Activated CD4-positive, alpha-beta T cell treated with anti-CD3 and anti-CD28 coated beads for 36 hours (primary cell): ENCODE measurements at regions of chr14 and their contacts with region 1.

Region 1: DNA sequence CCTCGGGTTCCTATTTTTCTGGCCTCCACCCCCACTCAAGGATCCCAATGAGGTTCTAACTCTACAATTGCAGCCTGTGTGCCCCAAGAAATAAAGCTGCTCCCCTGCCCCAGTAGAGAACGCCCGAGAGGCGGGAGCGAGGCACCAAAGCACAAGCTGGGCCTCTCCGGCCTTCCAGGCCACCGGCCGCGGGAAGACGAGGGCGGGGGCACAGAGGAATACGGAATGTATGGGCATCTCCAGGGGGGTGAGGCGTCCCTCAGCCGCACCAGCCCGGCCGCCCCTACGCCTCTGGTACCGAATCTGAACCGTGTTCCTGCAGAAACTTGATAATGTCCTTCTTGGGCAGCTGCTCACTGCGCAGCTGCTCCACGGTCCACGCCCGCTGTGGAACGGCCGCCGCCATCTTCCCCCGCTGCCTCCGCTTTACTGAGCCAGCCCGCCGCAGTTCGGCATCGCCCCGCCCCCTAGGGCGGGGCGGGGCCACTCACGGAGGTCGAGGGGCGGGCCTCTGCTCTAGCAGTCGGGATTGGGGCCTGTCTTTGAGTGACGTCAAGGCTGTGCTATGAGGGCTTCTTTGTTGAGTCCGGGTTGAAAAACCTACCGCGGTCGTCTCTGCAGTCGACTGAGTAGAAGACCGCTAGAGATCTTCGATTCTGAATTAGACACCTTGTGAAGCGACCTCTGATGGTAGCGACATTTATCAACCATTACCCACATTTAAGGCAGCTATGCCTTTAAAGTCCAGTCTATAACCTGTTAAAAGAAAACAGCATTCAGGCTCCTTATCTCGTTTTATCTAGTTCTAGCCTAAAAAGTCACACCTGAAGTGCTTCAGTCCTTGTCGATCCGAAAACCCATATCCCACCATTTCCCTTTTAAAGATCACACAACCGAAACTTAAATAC is at the start of gene FKBP3:
- DNase-seq: peak; percentile 97
- ATAC-seq: peak; percentile 94
- H3K4me3 Mint-ChIP-seq: peak within 1 kb of the TSS; percentile 93
- H3K27ac Mint-ChIP-seq: peak within 1 kb of the TSS; percentile 99
- H3K4me1 Mint-ChIP-seq: peaks cover 34% of the 10 kb centered on the region
- H3K27me3 Mint-ChIP-seq: no peaks in the 10 kb centered on the region
- total RNA-seq, gene FKBP3: 70.5 to 73.9 TPM

Region 2: DNA sequence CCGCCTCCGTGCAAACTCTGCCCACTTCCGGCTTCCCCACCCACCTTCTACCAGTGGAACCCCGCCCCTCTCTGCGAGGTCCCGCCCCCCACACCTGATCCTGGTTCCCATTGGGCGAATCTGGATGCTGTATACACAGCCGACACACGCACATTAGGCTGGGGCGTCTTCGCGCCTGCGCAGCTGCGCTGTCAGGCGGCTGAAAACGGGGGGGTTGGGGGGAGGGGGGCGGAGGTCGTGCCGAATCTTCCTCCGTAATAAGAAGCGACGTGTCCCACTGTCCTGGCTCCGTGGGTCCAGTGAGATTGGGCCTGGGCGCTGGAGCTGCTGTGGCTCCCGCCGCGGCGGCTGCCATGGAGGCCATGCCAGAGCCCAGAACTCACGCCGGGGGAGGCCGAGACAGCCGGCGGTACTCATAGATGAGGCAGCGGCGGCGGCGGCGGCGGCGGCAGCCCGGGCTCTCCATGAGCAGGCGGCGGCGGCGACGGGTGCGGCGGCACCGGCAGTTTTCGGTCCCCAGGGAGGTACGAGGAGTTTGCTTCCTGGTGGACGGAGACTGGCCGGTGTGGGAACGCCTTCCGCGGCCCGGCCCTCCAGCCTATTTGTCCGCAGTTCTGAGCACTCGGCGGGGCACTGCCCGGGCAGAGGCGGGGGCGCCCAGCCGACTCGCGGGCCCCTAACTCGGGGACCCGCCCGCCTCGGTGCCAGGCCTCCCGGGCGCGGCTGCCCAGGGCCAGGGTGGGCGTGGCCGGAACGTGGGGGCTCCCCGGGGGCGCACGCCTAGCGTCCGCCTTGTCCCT is 237.1 kb before region 1 on chr14:
- CTCF ChIA-PET with region 1: no interaction called
- POLR2A ChIA-PET with region 1: no interaction called
- intact Hi-C with region 1: loop called (anchors 1 kb)
- DNase-seq: peak; percentile 99
- ATAC-seq: peak; percentile 99
- H3K4me3 Mint-ChIP-seq: peak overlapping the region; percentile 82
- H3K27ac Mint-ChIP-seq: peak overlapping the region; percentile 90
- H3K4me1 Mint-ChIP-seq: peaks cover 13% of the 10 kb centered on the region
- H3K27me3 Mint-ChIP-seq: no peaks in the 10 kb centered on the region

Region 3: GRCh38 chr14:44961604-44962333 is 172.5 kb before region 1 on chr14 and contains the starts of genes KLHL28 and TOGARAM1:
- CTCF ChIA-PET with region 1: interaction called, 5 read pairs
- POLR2A ChIA-PET with region 1: interaction called, 8 read pairs
- intact Hi-C with region 1: loop called (anchors 1 kb)
- DNase-seq: peak; percentile 96
- ATAC-seq: peak; percentile 94
- H3K4me3 Mint-ChIP-seq: no peak within 1 kb of the TSS
- H3K27ac Mint-ChIP-seq: no peak within 1 kb of the TSS
- H3K4me1 Mint-ChIP-seq: peaks cover 51% of the 10 kb centered on the region
- H3K27me3 Mint-ChIP-seq: no peaks in the 10 kb centered on the region
- total RNA-seq, gene KLHL28: 11.3 to 12.3 TPM
- total RNA-seq, gene TOGARAM1: 5.7 to 6.6 TPM

Region 4: GRCh38 chr14:45070215-45070614 is 64.1 kb before region 1 on chr14:
- CTCF ChIA-PET with region 1: no interaction called
- POLR2A ChIA-PET with region 1: no interaction called
- intact Hi-C with region 1: no loop called
- DNase-seq: no peak
- ATAC-seq: no peak
- H3K4me3 Mint-ChIP-seq: no peak overlapping the region
- H3K27ac Mint-ChIP-seq: no peak overlapping the region
- H3K4me1 Mint-ChIP-seq: no peaks in the 10 kb centered on the region
- H3K27me3 Mint-ChIP-seq: no peaks in the 10 kb centered on the region

Region 5: DNA sequence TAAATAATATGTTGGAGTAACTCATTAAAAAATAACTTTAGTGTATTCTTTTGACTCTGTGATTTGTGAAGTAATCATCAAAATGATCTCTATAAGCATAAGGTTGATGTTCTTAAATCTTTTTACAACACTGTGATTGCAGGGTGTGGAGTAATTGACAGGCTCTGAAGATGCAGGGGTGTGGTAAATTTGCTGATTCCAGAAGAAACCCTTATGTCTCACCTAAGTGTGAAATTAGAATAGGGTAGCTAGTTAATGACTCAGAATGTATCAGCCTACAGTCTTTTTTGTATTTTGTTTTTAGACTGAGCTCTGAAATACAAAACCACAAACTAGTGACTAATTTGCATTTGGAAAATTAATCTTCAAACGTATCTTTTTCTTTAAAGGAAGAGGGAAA is 44.5 kb before region 1 on chr14:
- CTCF ChIA-PET with region 1: interaction called, 3 read pairs
- POLR2A ChIA-PET with region 1: no interaction called
- intact Hi-C with region 1: loop called in 1 of 2 experiments (anchors 1 kb)
- DNase-seq: peak; percentile 27
- ATAC-seq: peak; percentile 95
- H3K4me3 Mint-ChIP-seq: peak overlapping the region; percentile 43
- H3K27ac Mint-ChIP-seq: peak overlapping the region; percentile 88
- H3K4me1 Mint-ChIP-seq: peaks cover 72% of the 10 kb centered on the region
- H3K27me3 Mint-ChIP-seq: no peaks in the 10 kb centered on the region

Region 6: GRCh38 chr14:45169906-45170305 is 35.6 kb after region 1 on chr14:
- CTCF ChIA-PET with region 1: no interaction called
- POLR2A ChIA-PET with region 1: no interaction called
- intact Hi-C with region 1: no loop called
- DNase-seq: no peak
- ATAC-seq: no peak
- H3K4me3 Mint-ChIP-seq: no peak overlapping the region
- H3K27ac Mint-ChIP-seq: no peak overlapping the region
- H3K4me1 Mint-ChIP-seq: no peaks in the 10 kb centered on the region
- H3K27me3 Mint-ChIP-seq: no peaks in the 10 kb centered on the region

Region 7: DNA sequence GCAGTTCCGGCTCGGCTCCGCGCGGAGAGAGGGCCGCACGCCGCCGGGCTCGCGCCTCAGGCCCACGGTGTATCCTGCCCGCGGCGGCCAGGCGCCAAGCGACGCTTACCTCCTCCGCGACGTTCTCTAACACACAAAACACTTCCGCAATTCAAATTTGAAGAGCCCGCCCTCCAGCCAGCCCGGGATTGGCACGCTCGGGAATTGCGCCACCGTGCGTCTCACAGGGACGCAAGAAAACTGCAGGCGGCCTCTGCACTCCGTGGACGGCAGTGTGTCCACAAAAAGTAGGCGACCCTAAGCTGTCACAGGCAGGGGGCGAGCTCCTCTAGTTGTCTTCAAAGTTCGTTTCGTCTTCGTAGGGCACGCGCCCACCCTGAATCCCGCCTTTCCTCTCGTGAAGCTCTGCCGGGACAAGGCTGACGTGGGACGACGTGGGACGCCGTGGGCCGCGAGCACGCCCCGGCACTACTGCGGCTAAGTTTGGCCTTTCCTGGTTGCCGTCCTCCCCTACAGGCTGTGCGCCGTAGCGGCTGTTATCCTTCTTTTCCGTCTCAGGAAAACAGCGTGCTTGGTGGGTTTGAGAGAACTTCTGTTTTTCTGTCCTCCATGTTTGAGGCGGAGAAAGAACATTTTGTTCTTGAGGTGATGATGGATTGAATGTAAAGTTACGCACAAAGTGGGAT is 118.9 kb after region 1 on chr14 and contains the start of gene MIS18BP1:
- CTCF ChIA-PET with region 1: interaction called, 4 read pairs
- POLR2A ChIA-PET with region 1: interaction called, 3 read pairs
- intact Hi-C with region 1: loop called (anchors 1 kb)
- DNase-seq: peak; percentile 97
- ATAC-seq: peak; percentile 92
- H3K4me3 Mint-ChIP-seq: peak within 1 kb of the TSS; percentile 84
- H3K27ac Mint-ChIP-seq: peak within 1 kb of the TSS; percentile 97
- H3K4me1 Mint-ChIP-seq: peaks cover 23% of the 10 kb centered on the region
- H3K27me3 Mint-ChIP-seq: no peaks in the 10 kb centered on the region
- total RNA-seq, gene MIS18BP1: 67.0 to 88.4 TPM